Activated CD8-positive, alpha-beta T cell treated with anti-CD3 and anti-CD28 coated beads, Interleukin-2, amount 10 ng/mL, durations not matched to agents 7 days and 5 days (primary cell): ENCODE measurements at regions of chr5 and their contacts with region 1.

Region 1: GRCh38 chr5:142748568-142749249 is 21.5 kb upstream of the ARHGAP26 start:
- DNase-seq: peak; percentile 62
- ATAC-seq: peak; percentile 65
- H3K4me3 Mint-ChIP-seq: no peak overlapping the region
- H3K27ac Mint-ChIP-seq: no peak overlapping the region
- H3K4me1 Mint-ChIP-seq: peaks cover 10% of the 10 kb centered on the region
- H3K27me3 Mint-ChIP-seq: peaks cover 4% of the 10 kb centered on the region

Region 2: GRCh38 chr5:142699184-142699720 is 49.5 kb before region 1 on chr5:
- CTCF ChIA-PET with region 1: no interaction called
- POLR2A ChIA-PET with region 1: no interaction called
- DNase-seq: peak; percentile 84
- ATAC-seq: peak; percentile 88
- H3K4me3 Mint-ChIP-seq: no peak overlapping the region
- H3K27ac Mint-ChIP-seq: no peak overlapping the region
- H3K4me1 Mint-ChIP-seq: no peaks in the 10 kb centered on the region
- H3K27me3 Mint-ChIP-seq: peaks cover 21% of the 10 kb centered on the region

Region 3: GRCh38 chr5:142769741-142770631 is 21.3 kb after region 1 on chr5 and contains the start of gene ARHGAP26:
- CTCF ChIA-PET with region 1: interaction called, 76 read pairs
- POLR2A ChIA-PET with region 1: no interaction called
- DNase-seq: peak; percentile 96
- ATAC-seq: peak; percentile 96
- H3K4me3 Mint-ChIP-seq: peak within 1 kb of the TSS; percentile 96
- H3K27ac Mint-ChIP-seq: peak within 1 kb of the TSS; percentile 82
- H3K4me1 Mint-ChIP-seq: peaks cover 35% of the 10 kb centered on the region
- H3K27me3 Mint-ChIP-seq: peaks cover 3% of the 10 kb centered on the region
- total RNA-seq, gene ARHGAP26: 25.4 to 30.3 TPM

Region 4: GRCh38 chr5:142800776-142801494 is 52.2 kb after region 1 on chr5:
- CTCF ChIA-PET with region 1: interaction called, 40 read pairs
- POLR2A ChIA-PET with region 1: no interaction called
- DNase-seq: peak; percentile 74
- ATAC-seq: peak; percentile 84
- H3K4me3 Mint-ChIP-seq: peak overlapping the region; percentile 68
- H3K27ac Mint-ChIP-seq: peak overlapping the region; percentile 93
- H3K4me1 Mint-ChIP-seq: peaks cover 67% of the 10 kb centered on the region
- H3K27me3 Mint-ChIP-seq: no peaks in the 10 kb centered on the region

Region 5: GRCh38 chr5:142862594-142862993 is 113.9 kb after region 1 on chr5:
- CTCF ChIA-PET with region 1: interaction called, 64 read pairs
- POLR2A ChIA-PET with region 1: interaction called, 5 read pairs
- DNase-seq: no peak
- ATAC-seq: no peak
- H3K4me3 Mint-ChIP-seq: no peak overlapping the region
- H3K27ac Mint-ChIP-seq: no peak overlapping the region
- H3K4me1 Mint-ChIP-seq: peaks cover 35% of the 10 kb centered on the region
- H3K27me3 Mint-ChIP-seq: no peaks in the 10 kb centered on the region

Region 6: GRCh38 chr5:142915813-142916424 is 167.2 kb after region 1 on chr5:
- CTCF ChIA-PET with region 1: interaction called, 14 read pairs
- POLR2A ChIA-PET with region 1: no interaction called
- DNase-seq: peak; percentile 27
- ATAC-seq: no peak
- H3K4me3 Mint-ChIP-seq: no peak overlapping the region
- H3K27ac Mint-ChIP-seq: no peak overlapping the region
- H3K4me1 Mint-ChIP-seq: no peaks in the 10 kb centered on the region
- H3K27me3 Mint-ChIP-seq: no peaks in the 10 kb centered on the region